ENCODE measurements at regions of chr1 and their contacts with region 1.

Region 1: GRCh38 chr1:117895482-117896114 is 33.8 kb downstream of the GDAP2 start:
- DNase-seq: peak; percentile 56
- ATAC-seq: peak in 1 of 2 donors; percentile 19

Region 2: DNA sequence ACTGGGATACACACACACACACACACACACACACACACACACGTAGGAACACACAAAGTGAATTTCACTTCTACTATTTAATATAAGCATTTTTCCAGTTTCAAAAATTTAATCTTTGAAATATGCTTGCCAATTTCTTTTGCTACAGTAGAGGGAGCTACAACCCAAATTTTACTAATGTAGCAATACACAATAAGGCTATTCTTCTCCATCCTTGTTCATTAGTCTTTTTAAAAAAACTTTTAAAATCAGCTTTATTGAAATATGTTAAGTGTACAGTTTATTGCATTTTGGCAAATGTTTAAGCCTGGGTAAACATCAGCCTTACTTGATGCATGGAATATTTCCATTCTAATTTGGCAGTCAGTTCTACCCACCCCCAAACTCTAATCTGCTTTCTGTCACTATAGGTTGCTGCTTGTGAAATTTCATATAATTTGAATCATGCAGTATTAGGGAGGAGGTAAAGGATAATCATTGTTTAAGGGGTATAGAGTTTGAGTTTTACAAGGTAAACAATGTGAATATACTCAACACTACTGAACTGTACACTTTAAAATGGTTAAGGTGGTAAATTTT is 382.8 kb before region 1 on chr1:
- intact Hi-C with region 1: loop called (anchors 5 kb)
- DNase-seq: no peak
- ATAC-seq: peak in 1 of 2 donors; percentile 50

Region 3: GRCh38 chr1:117534995-117535467 is 360.6 kb before region 1 on chr1:
- intact Hi-C with region 1: loop called in 1 of 2 experiments (anchors 10 kb)
- DNase-seq: no peak
- ATAC-seq: peak; percentile 92 to 93

Region 4: DNA sequence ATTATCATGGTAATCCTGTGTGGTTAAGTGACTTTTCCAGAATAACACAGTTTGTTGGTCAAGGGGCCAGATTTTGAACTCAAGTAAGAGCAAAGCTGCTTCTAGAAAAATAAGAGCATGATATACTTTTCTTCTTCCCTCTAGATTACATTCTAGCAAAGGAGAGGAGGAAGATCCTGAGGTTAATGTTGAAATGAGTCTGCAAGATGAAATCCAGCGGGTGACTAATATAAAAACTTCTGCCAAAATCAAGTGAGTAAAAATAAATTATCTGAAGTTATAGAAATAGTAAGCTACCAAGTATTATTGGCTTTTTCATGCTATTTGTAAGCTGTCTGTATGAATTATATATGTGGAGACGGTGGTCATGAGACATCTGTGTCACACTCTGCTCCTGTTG is 46.7 kb after region 1 on chr1:
- intact Hi-C with region 1: no loop called
- DNase-seq: no peak
- ATAC-seq: no peak

Region 5: GRCh38 chr1:118204648-118205047 is 309.1 kb after region 1 on chr1:
- intact Hi-C with region 1: no loop called
- DNase-seq: no peak
- ATAC-seq: no peak